Gastrocnemius medialis (tissue), 4 donors: ENCODE measurements at regions of chrX and their contacts with region 1.

Region 1: DNA sequence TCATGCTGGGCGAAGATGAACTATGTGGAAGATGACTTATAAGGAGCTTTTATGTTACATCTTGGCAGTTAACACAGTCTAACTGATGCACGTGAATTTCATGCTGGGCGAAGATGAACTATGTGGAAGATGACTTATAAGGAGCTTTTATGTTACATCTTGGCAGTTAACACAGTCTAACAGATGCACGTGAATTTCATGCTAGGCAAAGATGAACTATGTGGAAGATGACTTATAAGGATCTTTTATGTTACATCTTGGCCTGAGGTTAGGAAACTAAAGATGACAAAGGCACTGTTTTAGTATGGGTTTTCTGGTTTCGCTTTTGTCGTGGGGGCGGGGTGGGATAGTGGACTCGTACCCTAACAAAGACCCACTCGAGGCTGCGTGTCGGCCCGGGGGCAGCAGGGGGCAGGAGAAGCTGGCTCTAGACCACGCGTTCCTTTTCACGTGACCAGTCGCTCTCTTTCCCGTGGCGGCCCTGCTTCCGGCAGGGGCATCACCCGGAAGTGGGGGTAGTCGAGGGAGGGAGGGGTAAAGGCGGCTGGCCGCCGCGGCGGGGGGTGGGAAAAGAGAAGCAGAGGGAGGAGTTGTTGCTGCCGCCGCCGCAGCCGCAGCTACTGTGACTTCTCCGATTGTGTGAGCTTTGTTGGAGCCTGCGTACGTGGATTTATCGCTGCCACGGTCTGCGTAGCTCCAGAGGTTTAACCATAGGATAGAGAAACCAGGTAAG is at the start of gene ATP7A:
- DNase-seq: peak; percentile 77 to 86
- ATAC-seq: peak; percentile 95 to 98
- H3K4me3 ChIP-seq: peak within 1 kb of the TSS; percentile 62 to 69 (median 65)
- H3K27ac ChIP-seq: peak within 1 kb of the TSS; percentile 78 to 91 (median 87)
- H3K4me1 ChIP-seq: peaks cover 14% of the 10 kb centered on the region in 2 donors
- H3K27me3 ChIP-seq: no peaks in the 10 kb centered on the region
- CTCF ChIP-seq: peak; percentile 25 to 65 (median 59)
- POLR2A ChIP-seq: peak; percentile 50 to 56
- total RNA-seq, gene ATP7A: 4.0 to 6.3 (median 5.1) TPM

Region 2: GRCh38 chrX:78024349-78025108 is 114.3 kb after region 1 on chrX:
- in situ Hi-C with region 1: loop called in 1 of 4 experiments (anchors 10 kb)
- intact Hi-C with region 1: loop called (anchors 5 kb)
- DNase-seq: no peak
- ATAC-seq: no peak
- H3K4me3 ChIP-seq: no peak overlapping the region
- H3K27ac ChIP-seq: no peak overlapping the region
- H3K4me1 ChIP-seq: no peaks in the 10 kb centered on the region
- H3K27me3 ChIP-seq: no peaks in the 10 kb centered on the region
- CTCF ChIP-seq: peak; percentile 24 to 53 (median 31)
- POLR2A ChIP-seq: no peak

Region 3: DNA sequence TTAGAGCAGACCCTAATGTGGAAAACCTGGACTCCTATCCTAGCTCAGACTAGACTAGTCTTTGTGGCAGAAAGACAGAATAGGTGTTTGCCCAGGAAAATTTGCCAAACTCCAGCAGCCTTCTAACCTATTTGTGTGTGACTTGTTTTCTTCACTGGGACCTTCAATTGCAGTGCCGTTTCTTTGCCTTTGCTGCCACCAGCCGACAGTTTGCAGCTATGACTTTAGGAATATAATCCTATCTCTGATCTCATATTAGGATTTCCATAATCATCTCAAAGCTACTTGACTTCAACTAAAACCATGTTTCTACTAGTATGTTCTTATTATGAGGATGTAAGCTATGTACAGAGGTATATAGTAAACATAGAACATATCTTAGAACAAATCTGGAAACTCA is 119.4 kb after region 1 on chrX:
- in situ Hi-C with region 1: loop called in 1 of 4 experiments (anchors 10 kb)
- intact Hi-C with region 1: loop called (anchors 5 kb)
- DNase-seq: no peak
- ATAC-seq: no peak
- H3K4me3 ChIP-seq: no peak overlapping the region
- H3K27ac ChIP-seq: no peak overlapping the region
- H3K4me1 ChIP-seq: no peaks in the 10 kb centered on the region
- H3K27me3 ChIP-seq: no peaks in the 10 kb centered on the region
- CTCF ChIP-seq: peak in 1 of 5 experiments; percentile 25
- POLR2A ChIP-seq: no peak

Region 4: GRCh38 chrX:78103623-78104446 is 193.6 kb after region 1 on chrX and contains the start of gene PGK1:
- in situ Hi-C with region 1: loop called in 3 of 4 experiments (anchors 10 to 25 kb)
- intact Hi-C with region 1: loop called (anchors 2 kb)
- DNase-seq: peak; percentile 90 to 95
- ATAC-seq: peak; percentile 81 to 90
- H3K4me3 ChIP-seq: peak within 1 kb of the TSS; percentile 81 to 94 (median 88)
- H3K27ac ChIP-seq: peak within 1 kb of the TSS; percentile 91 to 98 (median 98)
- H3K4me1 ChIP-seq: peaks cover 36 to 37% of the 10 kb centered on the region in 2 donors
- H3K27me3 ChIP-seq: no peaks in the 10 kb centered on the region
- CTCF ChIP-seq: no peak
- POLR2A ChIP-seq: peak; percentile 85 to 88
- total RNA-seq, gene PGK1: 220 to 392 (median 310) TPM